Activated B cell treated with CpG ODN at 0.5 μM for 24 hours (primary cell): ENCODE measurements at regions of chr6 and their contacts with region 1.

Region 1: DNA sequence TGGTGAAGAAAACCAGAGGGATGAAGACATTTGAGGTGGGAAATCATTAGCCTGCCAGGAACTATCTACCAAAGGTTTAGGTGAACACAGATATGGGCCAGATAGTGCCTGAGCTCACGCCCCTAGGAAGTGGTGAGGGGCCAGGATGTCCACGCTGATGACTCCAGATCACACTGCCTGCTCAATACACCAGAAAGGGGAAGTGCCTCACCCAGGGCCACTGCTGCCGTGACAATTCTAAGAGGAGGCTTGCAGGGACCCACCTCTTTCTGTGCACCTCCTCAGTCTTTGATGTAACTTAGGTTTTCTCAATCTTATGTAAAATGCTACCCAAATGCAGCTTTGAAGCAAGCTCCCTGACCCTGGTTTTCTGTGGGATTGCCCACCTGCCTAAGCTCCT is 5.4 kb upstream of the RAB44 start:
- DNase-seq: no peak
- ATAC-seq: peak; percentile 98
- H3K4me3 Mint-ChIP-seq: peak overlapping the region; percentile 57
- H3K27ac Mint-ChIP-seq: peak overlapping the region; percentile 93
- H3K4me1 Mint-ChIP-seq: peaks cover 82% of the 10 kb centered on the region
- H3K27me3 Mint-ChIP-seq: no peaks in the 10 kb centered on the region
- CTCF ChIP-seq: no peak

Region 2: DNA sequence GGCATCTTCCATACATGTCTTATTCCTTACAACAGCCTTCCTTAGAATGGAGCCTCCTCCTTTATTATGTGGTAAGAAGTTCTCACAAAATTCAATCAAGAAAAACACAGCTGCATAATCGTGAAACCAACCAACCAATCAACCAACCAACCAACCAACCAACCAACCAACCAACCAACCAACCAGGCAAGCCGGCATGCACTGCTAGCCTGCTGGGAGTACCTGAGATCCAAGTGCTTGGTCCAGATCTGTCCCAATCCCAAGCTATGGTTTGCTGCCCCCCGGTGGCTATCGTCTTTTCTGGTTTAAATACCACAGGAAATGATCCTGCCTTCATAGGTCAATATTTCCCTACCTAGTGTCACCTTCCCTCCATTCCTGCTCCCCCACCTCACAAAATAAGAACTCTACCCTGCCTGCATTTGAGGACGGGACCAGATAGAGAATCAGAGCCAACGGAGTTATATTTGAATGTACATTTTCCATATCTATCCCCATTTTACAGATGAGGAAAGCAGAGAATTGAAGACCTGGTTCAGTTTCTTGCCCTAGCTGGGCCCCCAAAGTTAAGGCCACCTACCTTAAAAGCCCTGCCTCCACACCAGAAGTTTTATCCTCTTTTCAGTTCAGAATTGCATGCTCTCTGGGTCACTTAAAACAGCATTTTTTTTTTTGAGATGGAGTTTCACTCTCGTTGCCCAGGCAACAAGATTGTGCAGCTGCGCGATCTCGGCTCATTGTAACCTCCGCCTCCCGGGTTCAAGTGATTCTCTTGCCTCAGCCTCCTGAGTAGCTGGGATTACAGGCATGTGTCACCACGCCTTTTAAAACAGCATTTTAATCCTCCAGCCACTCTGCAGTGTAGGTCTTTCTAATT is 32.5 kb after region 1 on chr6:
- CTCF ChIA-PET with region 1: interaction called, 4 read pairs
- POLR2A ChIA-PET with region 1: interaction called, 6 read pairs
- intact Hi-C with region 1: loop called (anchors 2 kb)
- DNase-seq: no peak
- ATAC-seq: peak; percentile 14
- H3K4me3 Mint-ChIP-seq: no peak overlapping the region
- H3K27ac Mint-ChIP-seq: peak overlapping the region; percentile 25
- H3K4me1 Mint-ChIP-seq: peaks cover 57% of the 10 kb centered on the region
- H3K27me3 Mint-ChIP-seq: no peaks in the 10 kb centered on the region
- CTCF ChIP-seq: no peak